Posterior vena cava (tissue), 2 donors: ENCODE measurements at regions of chr2 and their contacts with region 1.

Region 1: DNA sequence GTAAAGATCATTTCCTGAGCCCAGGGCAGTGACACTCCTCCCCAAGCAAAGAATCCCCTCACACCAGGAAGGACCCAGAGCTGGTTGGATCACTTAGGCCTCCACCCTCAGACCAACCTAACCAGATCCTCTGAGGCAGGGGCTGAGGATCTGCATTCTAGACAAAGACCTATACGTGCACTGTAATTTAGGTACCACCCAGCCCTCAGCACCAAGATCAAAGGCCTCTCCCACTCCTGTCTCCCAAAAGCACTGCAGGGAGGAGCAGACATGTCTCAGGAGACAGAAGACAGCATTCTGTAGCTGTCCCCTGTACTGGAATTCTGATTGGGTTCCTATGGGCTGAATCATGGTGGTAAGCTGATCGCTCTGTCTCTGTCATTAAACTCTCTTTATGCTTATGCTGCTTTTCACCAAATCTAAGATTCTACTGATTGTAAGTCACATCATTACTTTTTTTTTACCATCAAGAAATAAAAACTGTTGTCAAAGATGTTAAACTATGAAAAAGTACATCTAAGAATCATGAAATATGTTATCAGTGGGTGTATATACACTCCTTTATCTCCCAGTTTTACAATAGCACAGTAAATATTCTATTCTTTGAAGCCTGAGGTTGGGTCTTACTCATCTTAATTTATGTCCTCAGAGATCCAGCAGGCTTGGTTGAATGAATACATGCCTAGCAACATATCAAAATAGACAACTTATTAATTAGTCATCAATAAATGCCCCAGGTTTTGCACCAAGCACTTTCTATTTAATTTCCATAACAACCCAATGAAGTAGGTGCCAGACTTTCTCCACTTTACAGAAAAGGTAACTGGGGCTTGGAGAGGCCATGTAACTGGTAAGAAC is 28.3 kb downstream of the MCFD2 start:
- DNase-seq: no peak

Region 2: DNA sequence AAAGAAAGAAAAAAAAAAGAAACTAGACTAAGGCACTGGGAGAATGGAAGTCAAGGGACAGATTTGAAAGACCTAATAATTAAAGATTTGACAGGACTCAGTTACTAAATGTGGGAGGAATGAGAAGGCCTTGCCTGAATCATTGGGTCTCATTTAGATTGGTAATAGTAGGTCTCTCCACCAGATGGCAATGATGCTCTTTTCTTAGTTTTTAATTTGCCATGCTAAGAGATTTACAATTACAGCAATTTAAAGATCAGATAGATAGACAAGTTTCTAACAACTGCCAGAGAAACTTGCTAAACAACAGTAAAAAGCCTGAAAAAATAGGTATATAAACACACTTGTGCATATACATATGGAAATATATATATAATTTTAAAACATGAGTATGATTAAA is 254.9 kb before region 1 on chr2:
- intact Hi-C with region 1: loop called in 1 of 2 experiments (anchors 5 kb)
- DNase-seq: no peak

Region 3: DNA sequence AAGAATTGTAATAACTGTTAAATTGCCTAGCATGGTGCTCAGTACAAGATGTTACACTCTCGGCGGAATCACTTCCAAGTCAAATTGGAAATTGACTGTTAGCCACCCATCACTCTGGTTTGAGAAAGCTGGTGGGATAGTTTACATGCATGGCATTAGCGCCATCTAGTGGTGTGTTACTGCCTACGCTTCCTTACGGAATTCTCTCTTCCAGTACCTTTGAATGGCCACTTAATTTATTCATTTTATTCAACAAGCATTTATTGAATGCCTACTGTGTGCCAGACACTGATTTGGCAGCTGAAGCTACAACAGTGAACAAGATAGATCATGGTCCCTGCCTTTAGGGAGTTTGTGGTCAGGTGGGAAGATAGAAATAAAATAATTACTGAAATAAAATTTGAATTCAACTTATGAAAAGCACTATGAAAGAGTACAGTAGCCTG is 236.7 kb before region 1 on chr2:
- intact Hi-C with region 1: loop called in 1 of 2 experiments (anchors 5 kb)
- DNase-seq: no peak